Activated naive CD4-positive, alpha-beta T cell treated with anti-CD3 and anti-CD28 coated beads for 36 hours (primary cell): ENCODE measurements at regions of chr3 and their contacts with region 1.

Region 1: DNA sequence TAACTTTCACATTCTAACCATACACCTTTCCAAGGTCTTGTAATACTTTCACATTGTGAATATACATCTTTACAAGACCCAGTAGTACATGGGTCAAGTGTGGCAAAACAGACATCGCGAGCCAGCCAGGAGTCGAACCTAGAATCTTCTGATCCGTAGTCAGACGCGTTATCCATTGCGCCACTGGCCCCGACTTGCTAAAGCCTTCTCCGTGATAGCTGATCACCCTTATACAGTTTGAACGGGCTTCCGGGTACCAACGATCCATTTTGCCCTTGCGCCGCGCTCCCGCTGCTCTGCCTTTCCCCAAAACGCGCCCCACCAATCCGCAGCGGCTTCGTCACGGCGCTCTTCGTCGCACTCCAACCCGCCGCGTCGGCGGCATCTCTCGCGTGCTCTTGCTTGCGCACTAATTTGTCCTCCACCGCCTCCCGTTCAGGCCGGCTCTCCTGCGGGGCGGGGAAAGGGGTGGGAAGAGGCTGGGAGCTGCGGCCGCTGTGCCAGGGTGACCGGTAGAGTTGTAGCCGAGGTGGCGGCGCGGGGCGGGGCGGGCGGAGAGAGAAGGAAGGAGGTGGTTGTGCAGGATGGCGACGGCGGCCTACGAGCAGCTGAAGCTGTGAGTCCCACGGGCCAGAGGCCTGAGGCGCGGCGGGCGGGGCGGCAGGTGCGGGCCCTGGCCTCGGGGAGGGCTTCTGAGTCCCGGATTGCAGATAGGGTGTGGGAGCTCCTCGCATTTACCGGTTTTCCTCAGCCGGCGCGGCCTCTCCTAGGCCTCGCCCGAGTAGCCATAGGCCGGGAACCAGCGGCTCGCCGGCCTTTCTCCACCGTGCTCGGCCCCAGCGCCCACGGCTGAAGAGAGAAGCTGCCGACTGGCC is at the start of gene SACM1L:
- DNase-seq: peak; percentile 98
- H3K4me3 Mint-ChIP-seq: peak within 1 kb of the TSS; percentile 83
- H3K27ac Mint-ChIP-seq: peak within 1 kb of the TSS; percentile 90
- H3K4me1 Mint-ChIP-seq: peaks cover 44% of the 10 kb centered on the region
- H3K27me3 Mint-ChIP-seq: peaks cover 3% of the 10 kb centered on the region
- total RNA-seq, gene SACM1L: 44.9 to 51.0 TPM

Region 2: DNA sequence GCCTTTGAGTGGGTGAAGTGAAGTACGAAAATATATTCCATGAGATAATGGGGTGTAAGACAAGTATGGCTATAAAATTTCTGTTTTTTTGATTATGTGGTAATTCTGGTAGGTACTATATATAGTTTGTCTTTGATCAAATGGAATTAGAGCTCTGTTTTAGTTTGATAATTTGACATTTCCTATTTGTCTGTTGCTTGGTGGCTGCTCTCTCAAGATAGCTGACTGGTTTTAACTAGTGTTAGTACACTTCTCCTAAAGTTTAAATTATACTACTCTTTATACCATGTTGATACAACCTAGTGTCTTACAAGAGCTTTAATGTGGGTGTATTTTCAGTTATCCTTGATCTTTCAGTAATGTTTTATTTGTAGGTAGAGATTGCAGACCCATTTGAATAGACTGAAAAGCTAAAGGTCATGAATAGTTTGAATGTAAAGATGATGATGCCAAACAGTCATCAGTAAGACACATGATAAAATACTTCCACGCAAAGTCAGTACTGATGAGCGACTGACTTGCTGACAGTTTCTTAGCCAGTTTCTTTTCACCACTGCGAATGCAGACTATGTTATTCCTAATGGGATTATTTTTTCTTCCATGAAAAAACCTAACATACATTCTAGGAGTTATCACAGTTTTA is 15.3 kb after region 1 on chr3:
- CTCF ChIA-PET with region 1: interaction called, 10 read pairs
- intact Hi-C with region 1: no loop called
- DNase-seq: no peak
- H3K4me3 Mint-ChIP-seq: no peak overlapping the region
- H3K27ac Mint-ChIP-seq: no peak overlapping the region
- H3K4me1 Mint-ChIP-seq: peaks cover 41% of the 10 kb centered on the region
- H3K27me3 Mint-ChIP-seq: no peaks in the 10 kb centered on the region

Region 3: GRCh38 chr3:45841757-45842491 is 152.8 kb after region 1 on chr3 and contains the start of gene LZTFL1:
- CTCF ChIA-PET with region 1: no interaction called
- intact Hi-C with region 1: loop called (anchors 5 kb)
- DNase-seq: peak; percentile 96
- H3K4me3 Mint-ChIP-seq: peak within 1 kb of the TSS; percentile 90
- H3K27ac Mint-ChIP-seq: peak within 1 kb of the TSS; percentile 27
- H3K4me1 Mint-ChIP-seq: peaks cover 12% of the 10 kb centered on the region
- H3K27me3 Mint-ChIP-seq: no peaks in the 10 kb centered on the region
- total RNA-seq, gene LZTFL1: 3.6 to 4.1 TPM

Region 4: GRCh38 chr3:45978006-45978761 is 289.1 kb after region 1 on chr3:
- CTCF ChIA-PET with region 1: no interaction called
- intact Hi-C with region 1: loop called (anchors 5 kb)
- DNase-seq: peak; percentile 89
- H3K4me3 Mint-ChIP-seq: no peak overlapping the region
- H3K27ac Mint-ChIP-seq: peak overlapping the region; percentile 80
- H3K4me1 Mint-ChIP-seq: peaks cover 65% of the 10 kb centered on the region
- H3K27me3 Mint-ChIP-seq: no peaks in the 10 kb centered on the region

Region 5: GRCh38 chr3:46098319-46098761 is 409.2 kb after region 1 on chr3:
- CTCF ChIA-PET with region 1: no interaction called
- intact Hi-C with region 1: loop called (anchors 5 kb)
- DNase-seq: peak; percentile 69
- H3K4me3 Mint-ChIP-seq: no peak overlapping the region
- H3K27ac Mint-ChIP-seq: peak overlapping the region; percentile 76
- H3K4me1 Mint-ChIP-seq: peaks cover 31% of the 10 kb centered on the region
- H3K27me3 Mint-ChIP-seq: peaks cover 20% of the 10 kb centered on the region